Vagina (tissue), 2 donors: ENCODE measurements at regions of chr12 and their contacts with region 1.

Region 1: GRCh38 chr12:31589904-31590641 is 863 bp downstream of the DENND5B start:
- DNase-seq: no peak
- H3K4me3 ChIP-seq: peak overlapping the region; percentile 73 to 87
- H3K27ac ChIP-seq: peak overlapping the region; percentile 98
- H3K4me1 ChIP-seq: peaks cover 16% of the 10 kb centered on the region
- H3K27me3 ChIP-seq: no peaks in the 10 kb centered on the region
- CTCF ChIP-seq: no peak
- POLR2A ChIP-seq: no peak

Region 2: GRCh38 chr12:31491819-31492598 is 98.1 kb before region 1 on chr12:
- intact Hi-C with region 1: loop called (anchors 10 kb)
- DNase-seq: no peak
- H3K4me3 ChIP-seq: no peak overlapping the region
- H3K27ac ChIP-seq: no peak overlapping the region
- H3K4me1 ChIP-seq: peaks cover 23% of the 10 kb centered on the region
- H3K27me3 ChIP-seq: no peaks in the 10 kb centered on the region
- CTCF ChIP-seq: no peak
- POLR2A ChIP-seq: no peak